Lower leg skin (tissue), 4 donors: ENCODE measurements at regions of chr5 and their contacts with region 1.

Region 1: GRCh38 chr5:170253844-170254455 is 21.2 kb downstream of the C5orf58 start:
- DNase-seq: no peak
- H3K4me3 ChIP-seq: no peak overlapping the region
- CTCF ChIP-seq: no peak
- POLR2A ChIP-seq: no peak

Region 2: GRCh38 chr5:170216266-170216864 is 37.6 kb before region 1 on chr5:
- intact Hi-C with region 1: no loop called
- DNase-seq: no peak
- H3K4me3 ChIP-seq: no peak overlapping the region
- CTCF ChIP-seq: peak in 1 of 3 donors; percentile 14
- POLR2A ChIP-seq: no peak

Region 3: DNA sequence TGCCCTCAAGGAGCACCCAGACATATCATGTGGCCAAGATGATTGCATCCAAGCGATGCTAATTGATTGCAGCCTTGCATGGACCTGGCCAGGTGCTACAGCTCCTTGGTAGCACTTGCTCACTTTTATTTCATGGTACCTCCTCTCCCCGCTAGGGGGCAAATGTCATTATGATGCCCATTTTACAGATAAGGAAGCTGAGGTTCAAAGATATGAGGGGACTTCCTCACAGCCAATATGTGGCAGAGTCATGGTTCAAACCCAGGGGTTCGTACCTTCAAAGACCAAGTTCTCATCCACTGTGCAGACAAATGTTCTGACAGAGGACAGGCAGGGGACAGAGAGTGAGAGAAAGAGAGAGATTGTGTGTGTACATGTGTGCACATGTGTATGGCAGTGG is 157.2 kb after region 1 on chr5:
- intact Hi-C with region 1: loop called (anchors 10 kb)
- DNase-seq: no peak
- H3K4me3 ChIP-seq: no peak overlapping the region
- CTCF ChIP-seq: no peak
- POLR2A ChIP-seq: no peak

Region 4: DNA sequence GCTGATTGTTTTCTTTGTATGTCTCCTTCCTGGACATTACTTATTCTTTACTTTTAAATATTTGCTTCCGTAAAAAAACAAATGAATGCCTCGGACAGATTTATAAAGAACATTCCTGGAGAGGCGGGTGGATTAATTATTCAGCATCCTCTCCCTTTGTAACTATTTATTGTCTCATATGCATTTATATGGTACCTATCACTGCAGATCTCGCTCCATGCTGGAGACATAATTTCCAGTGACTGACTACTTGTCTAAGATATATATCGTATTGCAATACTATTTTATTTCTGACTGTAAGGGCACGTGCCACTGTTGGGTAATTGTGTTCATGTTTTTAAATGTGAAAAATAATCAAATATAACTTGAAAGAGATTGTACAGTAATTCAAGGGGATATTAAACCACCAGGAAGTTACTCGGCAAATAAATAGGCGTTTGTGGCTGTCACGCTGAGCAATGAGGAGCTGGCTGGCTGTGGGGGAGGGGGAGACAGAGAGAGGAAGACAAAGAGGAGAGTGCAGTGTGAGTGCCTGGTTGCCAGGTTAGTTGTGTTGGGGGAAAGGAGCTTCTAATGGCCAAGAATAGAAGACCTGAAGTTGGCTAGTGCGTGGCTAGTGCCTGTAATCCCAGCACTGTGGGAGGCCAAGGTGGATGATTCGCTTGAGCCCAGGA is 397.8 kb after region 1 on chr5:
- intact Hi-C with region 1: no loop called
- DNase-seq: peak in 1 of 2 donors; percentile 42
- H3K4me3 ChIP-seq: no peak overlapping the region
- CTCF ChIP-seq: no peak
- POLR2A ChIP-seq: no peak